ENCODE measurements at regions of chr2 and their contacts with region 1.

Region 1: DNA sequence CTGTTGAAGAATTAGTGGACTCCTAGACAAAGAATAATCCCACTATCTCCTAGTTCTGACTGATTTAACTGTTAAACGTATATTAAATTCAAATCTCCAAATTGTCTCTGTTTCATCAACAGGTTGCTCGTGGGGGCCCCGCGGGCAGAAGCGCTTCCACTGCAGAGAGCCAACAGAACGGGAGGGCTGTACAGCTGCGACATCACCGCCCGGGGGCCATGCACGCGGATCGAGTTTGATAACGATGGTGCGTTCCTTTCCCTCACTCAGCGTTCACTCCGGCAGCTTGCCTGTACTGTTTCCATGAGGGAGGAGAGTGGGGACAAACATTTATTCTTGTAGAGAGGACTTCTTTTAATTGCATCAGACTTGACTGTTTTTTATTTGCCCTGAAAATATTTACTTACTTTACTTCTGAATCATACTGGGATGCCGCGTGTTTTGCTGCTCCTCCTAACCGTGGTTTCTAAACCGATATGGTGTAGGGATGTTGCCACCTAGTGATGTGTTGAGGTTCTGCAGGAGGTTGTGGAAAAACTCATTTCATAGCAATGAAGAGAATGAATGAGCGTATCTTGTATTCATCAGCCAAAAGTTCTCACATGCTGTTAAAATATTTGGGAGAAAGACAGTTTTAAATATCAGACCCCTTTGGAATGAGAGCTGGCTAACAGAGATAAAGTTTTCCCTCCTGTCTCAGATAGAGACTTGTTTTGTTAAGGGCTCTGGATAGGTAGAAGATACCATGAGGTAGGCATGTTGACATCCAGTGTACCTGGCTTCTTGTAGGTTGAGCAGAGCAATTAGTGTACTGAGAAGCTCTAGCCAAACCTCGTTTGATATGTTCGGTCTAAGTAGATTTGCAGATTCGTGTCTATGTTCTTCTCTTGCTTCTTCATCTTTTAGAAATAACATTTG is 38.3 kb downstream of the ITGA6 start:
- DNase-seq: peak; percentile 47 to 86 (median 76)
- ATAC-seq: peak; percentile 49
- H3K4me3 ChIP-seq: no peak overlapping the region
- H3K4me3 Mint-ChIP-seq: peak overlapping the region; percentile 6
- H3K27ac ChIP-seq: peak overlapping the region; percentile 24 to 66
- H3K27ac Mint-ChIP-seq: peak overlapping the region; percentile 94
- H3K4me1 ChIP-seq: peaks cover 53% of the 10 kb centered on the region
- H3K4me1 Mint-ChIP-seq: peaks cover 74% of the 10 kb centered on the region
- H3K27me3 ChIP-seq: no peaks in the 10 kb centered on the region
- H3K27me3 Mint-ChIP-seq: no peaks in the 10 kb centered on the region
- CTCF ChIP-seq: peak; percentile 94

Region 2: DNA sequence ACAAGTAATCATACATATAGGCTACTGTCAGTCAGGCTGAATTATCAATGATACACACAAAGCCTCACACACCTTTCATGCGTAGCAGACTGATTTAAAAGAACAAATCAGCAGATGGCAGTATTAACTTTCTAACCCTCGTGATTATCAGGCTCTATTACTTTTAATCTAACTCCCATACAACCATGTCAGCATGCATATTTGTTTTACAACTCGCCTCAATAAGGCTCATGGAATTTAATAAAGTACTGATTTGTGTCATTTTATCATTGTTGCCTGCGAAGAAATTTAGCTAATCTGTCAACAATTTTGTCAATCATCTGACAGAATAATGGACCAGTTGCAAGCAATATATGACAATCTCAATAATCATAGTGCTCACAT is 654.4 kb before region 1 on chr2:
- CTCF ChIA-PET with region 1: interaction called, 3 read pairs
- POLR2A ChIA-PET with region 1: no interaction called
- intact Hi-C with region 1: loop called (anchors 2 kb)
- DNase-seq: peak in 2 of 9 experiments; percentile 22 to 44
- ATAC-seq: no peak
- H3K4me3 ChIP-seq: no peak overlapping the region
- H3K4me3 Mint-ChIP-seq: no peak overlapping the region
- H3K27ac ChIP-seq: no peak overlapping the region
- H3K27ac Mint-ChIP-seq: no peak overlapping the region
- H3K4me1 ChIP-seq: no peaks in the 10 kb centered on the region
- H3K4me1 Mint-ChIP-seq: no peaks in the 10 kb centered on the region
- H3K27me3 ChIP-seq: no peaks in the 10 kb centered on the region
- H3K27me3 Mint-ChIP-seq: no peaks in the 10 kb centered on the region
- CTCF ChIP-seq: peak; percentile 23

Region 3: DNA sequence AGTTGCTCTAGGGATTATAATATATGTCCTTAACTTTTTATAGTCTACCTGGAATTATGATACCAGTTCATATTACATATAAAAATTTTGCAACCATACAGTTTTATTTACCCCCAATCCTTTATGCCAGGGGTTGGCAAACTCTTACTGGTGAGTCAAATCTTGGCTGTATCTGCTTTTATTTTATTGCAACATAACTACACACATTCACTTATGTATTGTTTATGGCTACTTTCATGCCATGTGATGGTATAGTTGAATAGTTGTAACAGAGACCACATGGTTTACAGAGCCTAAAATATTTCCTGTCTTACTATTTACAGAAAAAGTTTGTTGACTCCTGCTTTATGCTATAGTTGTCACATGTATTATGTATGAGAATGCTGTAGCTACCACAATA is 337.2 kb before region 1 on chr2:
- CTCF ChIA-PET with region 1: interaction called, 10 read pairs
- POLR2A ChIA-PET with region 1: no interaction called
- intact Hi-C with region 1: no loop called
- DNase-seq: no peak
- ATAC-seq: no peak
- H3K4me3 ChIP-seq: no peak overlapping the region
- H3K4me3 Mint-ChIP-seq: no peak overlapping the region
- H3K27ac ChIP-seq: no peak overlapping the region
- H3K27ac Mint-ChIP-seq: no peak overlapping the region
- H3K4me1 ChIP-seq: no peaks in the 10 kb centered on the region
- H3K4me1 Mint-ChIP-seq: no peaks in the 10 kb centered on the region
- H3K27me3 ChIP-seq: no peaks in the 10 kb centered on the region
- H3K27me3 Mint-ChIP-seq: peaks cover 2% of the 10 kb centered on the region
- CTCF ChIP-seq: no peak

Region 4: GRCh38 chr2:172239944-172240590 is 225.6 kb before region 1 on chr2:
- CTCF ChIA-PET with region 1: interaction called, 11 read pairs
- POLR2A ChIA-PET with region 1: no interaction called
- intact Hi-C with region 1: loop called in 1 of 2 experiments (anchors 2 kb)
- DNase-seq: no peak
- ATAC-seq: no peak
- H3K4me3 ChIP-seq: no peak overlapping the region
- H3K4me3 Mint-ChIP-seq: no peak overlapping the region
- H3K27ac ChIP-seq: no peak overlapping the region
- H3K27ac Mint-ChIP-seq: no peak overlapping the region
- H3K4me1 ChIP-seq: peaks cover 6% of the 10 kb centered on the region
- H3K4me1 Mint-ChIP-seq: peaks cover 17% of the 10 kb centered on the region
- H3K27me3 ChIP-seq: peaks cover 0 to 6% of the 10 kb centered on the region in 2 experiments
- H3K27me3 Mint-ChIP-seq: peaks cover 7% of the 10 kb centered on the region
- CTCF ChIP-seq: no peak

Region 5: DNA sequence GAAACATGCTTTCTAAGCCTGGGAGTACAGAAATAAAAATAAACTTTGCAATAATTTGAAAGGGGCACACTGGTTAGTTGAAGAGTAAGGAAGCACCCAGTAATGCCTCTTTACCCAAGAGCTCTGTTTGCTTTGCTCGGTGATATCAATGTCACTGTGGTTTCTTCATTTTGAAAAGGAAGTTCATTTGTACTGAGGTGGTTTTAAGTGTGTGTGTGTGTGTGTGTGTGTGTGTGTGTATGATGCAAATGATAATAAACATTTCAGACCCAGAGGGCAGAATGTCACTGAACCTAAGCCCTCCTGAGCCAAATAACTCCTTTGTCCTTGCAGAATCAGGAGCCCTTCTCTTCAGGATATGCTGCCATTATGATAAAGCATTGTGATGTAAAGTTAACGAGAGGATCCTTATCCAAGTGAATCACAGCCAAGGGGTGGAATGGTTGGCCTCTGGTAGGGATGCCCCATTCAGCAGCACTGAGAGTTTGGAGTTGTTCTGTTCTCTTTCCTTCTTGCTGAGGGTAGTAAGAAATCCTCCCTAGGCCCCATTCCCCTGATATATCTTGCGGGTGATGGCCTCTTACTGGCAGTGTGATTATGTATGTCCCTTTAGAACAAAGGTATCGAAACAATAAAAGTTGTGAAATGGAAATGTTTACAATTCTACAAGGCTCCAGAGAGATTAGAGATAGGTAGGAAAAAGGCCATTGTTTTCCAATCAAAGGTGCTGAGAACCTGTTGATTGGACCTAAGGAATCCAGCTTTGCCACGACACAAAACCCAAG is 30.7 kb before region 1 on chr2:
- CTCF ChIA-PET with region 1: interaction called, 657 read pairs
- POLR2A ChIA-PET with region 1: interaction called, 150 read pairs
- intact Hi-C with region 1: no loop called
- DNase-seq: peak; percentile 9 to 87 (median 55)
- ATAC-seq: peak; percentile 73
- H3K4me3 ChIP-seq: peak overlapping the region in 1 of 2 experiments; percentile 16
- H3K4me3 Mint-ChIP-seq: peak overlapping the region; percentile 65
- H3K27ac ChIP-seq: peak overlapping the region in 1 of 2 experiments; percentile 20
- H3K27ac Mint-ChIP-seq: no peak overlapping the region
- H3K4me1 ChIP-seq: peaks cover 95% of the 10 kb centered on the region
- H3K4me1 Mint-ChIP-seq: peaks cover 54% of the 10 kb centered on the region
- H3K27me3 ChIP-seq: no peaks in the 10 kb centered on the region
- H3K27me3 Mint-ChIP-seq: no peaks in the 10 kb centered on the region
- CTCF ChIP-seq: no peak

Region 6: GRCh38 chr2:172710584-172711024 is 244.9 kb after region 1 on chr2:
- CTCF ChIA-PET with region 1: interaction called, 3 read pairs
- POLR2A ChIA-PET with region 1: no interaction called
- intact Hi-C with region 1: loop called in 1 of 2 experiments (anchors 5 kb)
- DNase-seq: peak in 7 of 9 experiments; percentile 16 to 60 (median 47)
- ATAC-seq: no peak
- H3K4me3 ChIP-seq: no peak overlapping the region
- H3K4me3 Mint-ChIP-seq: no peak overlapping the region
- H3K27ac ChIP-seq: no peak overlapping the region
- H3K27ac Mint-ChIP-seq: no peak overlapping the region
- H3K4me1 ChIP-seq: no peaks in the 10 kb centered on the region
- H3K4me1 Mint-ChIP-seq: no peaks in the 10 kb centered on the region
- H3K27me3 ChIP-seq: no peaks in the 10 kb centered on the region
- H3K27me3 Mint-ChIP-seq: peaks cover 3% of the 10 kb centered on the region
- CTCF ChIP-seq: peak; percentile 68